CD4-positive, alpha-beta memory T cell (primary cell): ENCODE measurements at regions of chr2 and their contacts with region 1.

Region 1: DNA sequence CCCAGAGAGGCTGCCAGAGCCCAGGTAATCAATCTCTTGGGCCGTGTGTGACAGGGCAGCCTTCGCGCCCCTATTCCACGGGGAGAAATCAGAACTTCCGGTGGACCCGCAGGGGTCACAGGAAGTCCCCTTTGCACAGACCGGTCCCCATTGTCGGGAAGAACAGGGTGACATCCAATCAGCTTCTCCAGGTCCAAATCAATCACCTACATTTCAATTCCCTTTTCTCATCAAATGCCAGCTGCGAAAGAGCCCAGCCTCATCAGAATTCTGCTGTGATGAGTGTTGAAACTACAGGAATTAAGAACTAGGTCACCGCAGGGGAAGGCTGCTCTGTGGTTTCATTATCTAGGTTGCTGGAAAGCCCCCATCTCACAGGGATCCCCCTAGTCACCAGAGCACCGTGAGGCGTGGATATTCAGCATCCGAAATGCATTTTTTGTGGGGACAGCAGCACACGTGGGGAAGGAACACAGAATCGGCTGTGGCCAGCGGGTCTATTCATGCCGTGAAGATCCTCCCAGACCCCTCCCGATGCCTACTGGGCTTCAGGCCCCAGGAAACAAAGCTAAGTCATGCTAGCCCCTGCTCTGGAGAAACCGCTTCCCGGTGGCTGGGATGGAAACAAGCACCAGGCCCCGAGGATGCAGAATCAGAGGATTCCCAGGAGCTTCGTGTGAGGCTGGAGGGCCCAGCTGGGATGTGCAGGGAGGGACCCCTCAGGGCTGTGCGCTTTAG is 193.7 kb upstream of the ID2 start:
- DNase-seq: peak; percentile 76 to 94 (median 85)
- H3K4me3 ChIP-seq: peak overlapping the region; percentile 50 to 66
- H3K4me3 Mint-ChIP-seq: peak overlapping the region; percentile 82 to 93 (median 88)
- H3K27ac ChIP-seq: peak overlapping the region; percentile 83
- H3K27ac Mint-ChIP-seq: peak overlapping the region; percentile 94 to 100 (median 99)
- H3K4me1 ChIP-seq: peaks cover 73% of the 10 kb centered on the region
- H3K4me1 Mint-ChIP-seq: peaks cover 44 to 79% (median 56%) of the 10 kb centered on the region in 4 donors
- H3K27me3 ChIP-seq: no peaks in the 10 kb centered on the region
- H3K27me3 Mint-ChIP-seq: no peaks in the 10 kb centered on the region

Region 2: GRCh38 chr2:8303322-8303832 is 184.8 kb before region 1 on chr2:
- CTCF ChIA-PET with region 1: no interaction called
- POLR2A ChIA-PET with region 1: no interaction called
- intact Hi-C with region 1: loop called (anchors 2 kb)
- DNase-seq: peak; percentile 72 to 82 (median 76)
- H3K4me3 ChIP-seq: peak overlapping the region; percentile 33 to 40
- H3K4me3 Mint-ChIP-seq: peak overlapping the region; percentile 7 to 83 (median 77)
- H3K27ac ChIP-seq: no peak overlapping the region
- H3K27ac Mint-ChIP-seq: peak overlapping the region; percentile 73 to 90 (median 83)
- H3K4me1 ChIP-seq: peaks cover 70% of the 10 kb centered on the region
- H3K4me1 Mint-ChIP-seq: peaks cover 48 to 86% (median 67%) of the 10 kb centered on the region in 4 donors
- H3K27me3 ChIP-seq: no peaks in the 10 kb centered on the region
- H3K27me3 Mint-ChIP-seq: no peaks in the 10 kb centered on the region

Region 3: GRCh38 chr2:8477552-8478470 is 10.4 kb before region 1 on chr2:
- CTCF ChIA-PET with region 1: interaction called, 18 read pairs
- POLR2A ChIA-PET with region 1: interaction called, 46 read pairs
- intact Hi-C with region 1: loop called (anchors 1 kb)
- DNase-seq: peak; percentile 55 to 66 (median 60)
- H3K4me3 ChIP-seq: peak overlapping the region; percentile 27 to 41
- H3K4me3 Mint-ChIP-seq: peak overlapping the region; percentile 75 to 94 (median 82)
- H3K27ac ChIP-seq: peak overlapping the region; percentile 70
- H3K27ac Mint-ChIP-seq: peak overlapping the region; percentile 92 to 98 (median 96)
- H3K4me1 ChIP-seq: peaks cover 95% of the 10 kb centered on the region
- H3K4me1 Mint-ChIP-seq: peaks cover 66 to 100% (median 88%) of the 10 kb centered on the region in 4 donors
- H3K27me3 ChIP-seq: no peaks in the 10 kb centered on the region
- H3K27me3 Mint-ChIP-seq: no peaks in the 10 kb centered on the region

Region 4: DNA sequence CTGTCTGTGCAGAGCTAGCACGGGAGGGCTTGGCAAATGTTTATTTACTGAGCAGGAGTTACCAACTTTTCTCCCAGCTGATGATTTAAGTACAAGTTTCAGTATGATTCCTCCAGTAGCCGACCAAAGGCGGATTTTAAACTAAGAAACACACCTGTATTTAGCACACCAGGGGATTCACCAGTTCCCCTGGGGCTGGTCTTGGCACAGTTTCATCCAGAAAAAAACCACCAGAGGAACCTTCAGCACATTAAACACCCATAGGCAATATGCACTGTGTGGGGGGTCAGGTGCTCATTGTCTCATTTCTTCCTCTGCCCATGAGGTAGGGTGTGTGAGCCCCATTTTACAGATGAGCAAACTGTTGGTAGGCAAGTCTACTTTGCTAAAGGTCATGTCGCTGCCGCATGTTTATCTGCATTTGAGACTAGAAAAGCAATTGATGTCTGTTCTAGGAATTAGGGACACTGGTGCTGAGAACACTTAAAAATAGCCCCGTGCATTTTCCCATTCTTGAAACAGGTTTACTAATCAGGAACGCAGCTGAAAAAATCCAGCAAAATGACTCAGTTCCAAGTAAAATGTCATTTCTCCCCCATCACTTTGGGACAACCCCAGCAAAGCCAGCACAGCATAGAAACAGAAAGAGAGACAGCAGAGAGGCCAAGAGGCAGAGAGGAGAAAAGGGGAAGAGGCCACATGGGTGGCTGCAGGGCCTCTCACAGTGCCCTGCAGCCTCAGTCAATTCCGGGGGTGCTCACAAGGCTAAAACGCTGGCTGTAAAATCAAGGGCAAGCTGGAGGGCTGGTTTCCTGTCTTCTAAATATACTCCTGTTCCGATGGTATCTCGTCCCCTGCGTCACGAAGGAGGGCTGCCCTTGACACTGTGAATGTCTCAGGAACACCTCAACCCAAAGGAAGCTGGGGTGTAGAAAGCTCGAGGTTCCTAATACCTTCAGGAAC is 26.9 kb after region 1 on chr2:
- CTCF ChIA-PET with region 1: no interaction called
- POLR2A ChIA-PET with region 1: interaction called, 11 read pairs
- intact Hi-C with region 1: loop called (anchors 1 kb)
- DNase-seq: peak; percentile 66 to 83 (median 71)
- H3K4me3 ChIP-seq: no peak overlapping the region
- H3K4me3 Mint-ChIP-seq: peak overlapping the region in 7 of 8 donors; percentile 47 to 68 (median 60)
- H3K27ac ChIP-seq: peak overlapping the region; percentile 65
- H3K27ac Mint-ChIP-seq: peak overlapping the region; percentile 85 to 95 (median 88)
- H3K4me1 ChIP-seq: peaks cover 49% of the 10 kb centered on the region
- H3K4me1 Mint-ChIP-seq: peaks cover 26 to 67% (median 42%) of the 10 kb centered on the region in 4 donors
- H3K27me3 ChIP-seq: no peaks in the 10 kb centered on the region
- H3K27me3 Mint-ChIP-seq: no peaks in the 10 kb centered on the region

Region 5: GRCh38 chr2:8623958-8624591 is 135.9 kb after region 1 on chr2:
- CTCF ChIA-PET with region 1: no interaction called
- POLR2A ChIA-PET with region 1: no interaction called
- intact Hi-C with region 1: no loop called
- DNase-seq: no peak
- H3K4me3 ChIP-seq: no peak overlapping the region
- H3K4me3 Mint-ChIP-seq: no peak overlapping the region
- H3K27ac ChIP-seq: no peak overlapping the region
- H3K27ac Mint-ChIP-seq: no peak overlapping the region
- H3K4me1 ChIP-seq: no peaks in the 10 kb centered on the region
- H3K4me1 Mint-ChIP-seq: peaks cover 0 to 5% (median 1%) of the 10 kb centered on the region in 4 donors
- H3K27me3 ChIP-seq: no peaks in the 10 kb centered on the region
- H3K27me3 Mint-ChIP-seq: peaks cover 0 to 2% of the 10 kb centered on the region in 2 donors

Region 6: DNA sequence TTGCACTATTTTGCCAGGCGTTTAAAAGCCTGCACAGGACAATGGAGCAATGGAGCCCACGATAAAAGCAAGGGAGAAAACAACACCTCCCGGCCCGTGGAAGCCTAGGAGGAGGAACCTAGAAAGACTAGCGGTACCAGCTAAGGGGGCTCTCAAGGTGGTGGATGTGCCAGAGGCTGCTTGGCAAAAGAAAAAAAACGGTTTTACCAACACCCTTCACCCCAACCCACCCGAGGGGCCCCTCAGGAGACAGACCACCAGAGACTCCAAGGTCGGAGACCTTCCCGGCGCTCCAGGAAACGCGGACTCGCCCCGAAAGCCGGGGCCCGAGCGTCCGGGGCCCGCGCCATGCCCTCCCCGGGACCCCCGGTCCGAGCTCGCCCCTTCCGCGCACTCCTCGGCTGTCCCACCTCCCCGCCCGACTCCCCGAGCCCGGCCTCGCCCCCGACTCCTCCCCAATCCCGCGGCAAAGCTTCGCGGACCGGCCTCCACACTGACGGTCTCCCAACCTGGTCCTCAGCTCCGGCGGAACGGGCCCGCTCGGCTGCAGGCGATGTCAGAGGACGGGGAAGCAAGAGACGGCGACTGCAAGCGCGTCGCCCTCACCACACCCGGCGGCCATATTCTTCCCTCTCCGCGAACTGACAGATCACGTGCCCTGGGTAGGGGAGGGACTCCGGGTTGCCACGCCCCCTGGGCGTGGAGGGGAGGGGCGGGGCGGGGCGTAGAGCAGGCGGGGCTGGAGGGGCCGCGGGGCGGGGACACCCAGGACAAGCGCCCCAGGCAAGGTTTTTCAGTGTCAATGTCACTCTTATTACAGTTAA is 349.0 kb after region 1 on chr2 and contains the start of gene KIDINS220:
- CTCF ChIA-PET with region 1: no interaction called
- POLR2A ChIA-PET with region 1: no interaction called
- intact Hi-C with region 1: loop called (anchors 10 kb)
- DNase-seq: peak; percentile 82 to 87 (median 84)
- H3K4me3 ChIP-seq: peak within 1 kb of the TSS; percentile 77 to 85
- H3K4me3 Mint-ChIP-seq: peak within 1 kb of the TSS; percentile 99 to 100 (median 100)
- H3K27ac ChIP-seq: peak within 1 kb of the TSS; percentile 61
- H3K27ac Mint-ChIP-seq: peak within 1 kb of the TSS; percentile 87 to 99 (median 99)
- H3K4me1 ChIP-seq: peaks cover 44% of the 10 kb centered on the region
- H3K4me1 Mint-ChIP-seq: peaks cover 33 to 62% (median 46%) of the 10 kb centered on the region in 4 donors
- H3K27me3 ChIP-seq: no peaks in the 10 kb centered on the region
- H3K27me3 Mint-ChIP-seq: no peaks in the 10 kb centered on the region
- total RNA-seq, gene KIDINS220: 52.0 to 52.3 TPM